Calu3 (cell line): ENCODE measurements at regions of chr22 and their contacts with region 1.

Region 1: DNA sequence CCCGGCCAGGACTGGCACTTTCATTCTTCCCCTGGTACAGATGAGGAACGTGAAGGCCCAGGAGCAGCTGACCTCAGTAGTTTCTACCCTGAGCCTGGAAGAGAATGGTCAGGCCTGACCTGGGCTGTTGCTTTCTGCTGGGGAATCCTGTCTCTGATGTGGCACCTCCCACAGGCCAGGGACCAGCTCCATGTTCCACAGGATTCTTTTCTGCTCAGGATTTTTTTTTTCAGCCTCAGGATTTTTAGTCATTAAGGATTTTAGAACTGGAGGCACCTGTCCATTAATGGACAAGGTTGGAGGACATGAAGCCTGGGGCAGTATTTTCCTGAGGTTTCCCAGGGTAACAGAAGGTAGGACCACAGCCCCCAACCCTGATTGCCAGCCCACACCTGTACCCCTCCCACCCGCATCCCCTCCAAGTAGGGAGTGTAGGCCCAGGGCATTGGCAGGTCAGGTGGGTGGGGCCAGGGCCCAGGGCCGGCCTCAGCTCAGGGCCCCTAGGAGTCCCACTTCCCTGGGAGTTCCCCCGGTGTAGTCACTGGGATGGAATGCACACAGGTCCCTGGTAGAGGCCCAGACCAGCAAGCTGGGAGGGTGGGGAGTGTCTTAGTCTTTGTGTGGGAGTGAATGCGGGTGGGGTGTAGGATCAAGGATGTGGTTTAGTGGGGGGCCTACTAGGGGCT is 16.1 kb downstream of the BIK start:
- DNase-seq: peak; percentile 94
- H3K4me3 Mint-ChIP-seq: peak overlapping the region; percentile 99
- H3K27ac Mint-ChIP-seq: peak overlapping the region; percentile 94
- H3K4me1 Mint-ChIP-seq: peaks cover 48% of the 10 kb centered on the region
- H3K27me3 Mint-ChIP-seq: no peaks in the 10 kb centered on the region
- CTCF ChIP-seq: no peak

Region 2: DNA sequence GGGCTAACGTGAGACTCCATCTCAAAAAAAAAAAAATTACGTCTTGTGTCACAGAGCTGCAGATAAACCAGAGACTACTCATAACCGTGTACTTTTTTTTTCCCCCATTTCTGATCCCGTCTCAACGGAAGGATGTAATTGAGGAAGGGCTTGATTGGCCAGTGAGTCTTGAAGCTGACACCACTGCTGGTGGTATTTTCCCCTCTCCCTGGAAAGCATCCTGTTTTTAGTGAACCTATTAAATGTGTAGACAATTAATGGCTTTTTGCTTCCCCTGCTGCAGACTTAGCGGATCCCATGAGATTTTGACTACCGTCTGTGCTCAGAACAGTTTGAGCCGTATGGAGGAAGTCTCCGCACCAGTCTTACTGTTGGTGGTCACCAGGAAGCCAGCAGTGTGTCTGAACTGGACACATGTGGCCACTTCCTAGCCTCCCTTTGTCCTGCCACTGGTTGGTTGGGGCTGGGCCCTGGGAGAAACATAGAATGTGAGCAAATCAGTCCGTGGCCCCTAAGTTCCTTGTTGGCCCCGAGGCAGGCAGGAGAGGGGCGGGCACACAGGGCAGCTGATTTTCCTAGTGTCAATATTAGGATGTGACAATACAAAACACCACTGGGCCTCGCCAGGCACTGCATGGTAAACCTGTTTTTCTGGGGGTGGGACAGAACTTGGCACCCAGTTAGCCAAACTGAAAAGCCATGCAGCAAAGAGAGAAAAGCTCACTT is 12.9 kb before region 1 on chr22:
- CTCF ChIA-PET with region 1: interaction called, 11 read pairs
- intact Hi-C with region 1: no loop called
- DNase-seq: peak; percentile 54
- H3K4me3 Mint-ChIP-seq: no peak overlapping the region
- H3K27ac Mint-ChIP-seq: no peak overlapping the region
- H3K4me1 Mint-ChIP-seq: peaks cover 36% of the 10 kb centered on the region
- H3K27me3 Mint-ChIP-seq: no peaks in the 10 kb centered on the region
- CTCF ChIP-seq: no peak

Region 3: GRCh38 chr22:43136801-43137200 is 10.2 kb after region 1 on chr22:
- CTCF ChIA-PET with region 1: no interaction called
- intact Hi-C with region 1: no loop called
- DNase-seq: no peak
- H3K4me3 Mint-ChIP-seq: no peak overlapping the region
- H3K27ac Mint-ChIP-seq: no peak overlapping the region
- H3K4me1 Mint-ChIP-seq: no peaks in the 10 kb centered on the region
- H3K27me3 Mint-ChIP-seq: no peaks in the 10 kb centered on the region
- CTCF ChIP-seq: no peak

Region 4: GRCh38 chr22:43168416-43169309 is 42.0 kb after region 1 on chr22:
- CTCF ChIA-PET with region 1: no interaction called
- intact Hi-C with region 1: no loop called
- DNase-seq: no peak
- H3K4me3 Mint-ChIP-seq: no peak overlapping the region
- H3K27ac Mint-ChIP-seq: no peak overlapping the region
- H3K4me1 Mint-ChIP-seq: no peaks in the 10 kb centered on the region
- H3K27me3 Mint-ChIP-seq: no peaks in the 10 kb centered on the region
- CTCF ChIP-seq: no peak